Posterior vena cava (tissue), 2 donors: ENCODE measurements at regions of chr15 and their contacts with region 1.

Region 1: DNA sequence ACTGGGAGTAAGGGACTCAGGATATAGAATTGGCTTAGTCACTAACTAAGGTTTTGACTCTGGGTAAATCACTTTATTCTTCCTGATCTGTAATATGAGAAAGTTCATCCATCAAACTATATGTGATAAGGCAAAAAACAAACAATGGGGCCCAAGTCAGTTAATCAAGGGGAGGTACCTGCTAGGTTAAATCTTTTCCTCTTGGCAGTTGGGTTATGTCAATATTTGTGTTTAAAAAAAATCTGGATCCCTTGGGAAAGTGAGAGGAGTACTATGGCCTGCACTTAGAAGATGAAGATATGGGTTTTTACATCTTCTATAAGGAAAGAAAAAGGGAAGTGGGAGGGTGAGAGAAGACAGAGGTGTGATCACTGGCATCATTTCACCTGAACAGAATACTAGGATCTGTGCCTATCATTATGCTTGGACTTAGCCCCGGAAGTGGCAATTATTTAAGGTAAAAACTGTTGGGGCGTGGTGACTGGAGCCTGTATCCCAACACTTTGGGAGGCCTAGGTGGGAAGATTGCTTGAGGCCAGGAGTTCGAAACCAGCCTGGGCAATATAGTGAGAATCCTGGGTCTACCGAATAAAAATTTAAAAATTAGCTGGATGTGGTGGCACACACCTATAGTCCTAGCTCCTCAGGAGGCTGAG is 2.8 kb upstream of the SLC28A2 start:
- DNase-seq: no peak

Region 2: GRCh38 chr15:44130778-44131177 is 1118.5 kb before region 1 on chr15:
- intact Hi-C with region 1: no loop called
- DNase-seq: no peak

Region 3: GRCh38 chr15:45265506-45265905 is 16.3 kb after region 1 on chr15:
- intact Hi-C with region 1: loop called in 1 of 2 experiments (anchors 1 kb)
- DNase-seq: no peak